ENCODE measurements at regions of chr3 and their contacts with region 1.

Region 1: DNA sequence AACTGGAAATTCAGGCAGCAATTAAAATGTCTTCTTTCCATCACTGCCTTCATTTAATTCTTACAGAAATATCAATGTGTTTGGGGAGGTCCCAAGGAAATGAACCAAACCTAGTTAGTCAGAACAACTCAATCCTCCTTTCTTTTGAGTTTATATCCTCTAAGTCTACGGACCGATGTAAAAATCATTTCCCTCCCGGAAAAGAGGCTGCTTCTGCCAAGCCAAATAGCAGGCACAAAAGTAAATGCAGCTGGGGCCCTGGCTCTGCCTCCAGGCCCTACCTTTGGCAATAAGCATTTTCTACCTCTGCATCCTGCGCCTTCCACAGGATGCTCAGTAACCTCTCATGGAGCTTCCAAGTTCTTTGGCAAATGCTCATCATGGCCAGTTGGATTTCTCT is 122.5 kb upstream of the COL8A1 start:
- DNase-seq: no peak

Region 2: DNA sequence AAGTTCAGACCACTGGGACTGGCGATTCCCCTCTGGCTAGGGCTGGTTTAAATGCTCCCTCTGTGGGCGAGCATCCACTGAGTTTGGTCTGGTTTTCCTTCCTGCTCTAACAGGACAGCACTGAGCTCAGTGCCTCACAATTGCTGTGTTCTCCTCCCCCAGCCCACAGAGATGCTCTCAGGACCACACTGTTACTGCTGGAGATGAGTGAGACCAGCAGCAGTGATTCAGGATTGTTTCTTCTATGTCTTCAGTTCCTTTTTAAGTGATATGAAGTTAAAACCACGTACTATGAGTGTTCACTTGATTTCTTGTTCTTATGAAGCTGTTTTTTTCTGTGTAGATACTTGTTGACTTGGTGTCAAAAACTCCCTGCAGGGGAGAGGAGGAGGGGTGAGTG is 57.9 kb before region 1 on chr3:
- intact Hi-C with region 1: no loop called
- DNase-seq: no peak

Region 3: DNA sequence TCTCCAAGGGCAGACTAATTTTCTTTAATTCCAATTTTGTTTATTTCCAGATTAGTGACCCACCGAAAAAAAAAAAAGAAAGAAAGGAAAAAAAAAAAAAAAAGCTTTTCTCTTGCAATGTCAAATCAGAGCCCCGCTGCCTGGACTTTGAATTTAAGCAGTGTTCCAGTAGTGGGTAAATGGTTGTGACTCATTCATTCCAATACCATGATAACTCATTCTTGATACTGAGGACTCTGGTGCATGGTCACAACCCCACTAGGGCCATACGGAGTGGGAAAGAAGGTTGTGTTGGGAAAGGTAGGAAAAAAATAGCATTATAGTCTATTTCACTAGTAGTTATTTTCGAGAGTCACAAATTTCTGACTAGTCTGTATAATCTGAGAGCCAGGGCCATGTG is 63.4 kb after region 1 on chr3:
- intact Hi-C with region 1: loop called in 1 of 2 experiments (anchors 10 kb)
- DNase-seq: no peak

Region 4: DNA sequence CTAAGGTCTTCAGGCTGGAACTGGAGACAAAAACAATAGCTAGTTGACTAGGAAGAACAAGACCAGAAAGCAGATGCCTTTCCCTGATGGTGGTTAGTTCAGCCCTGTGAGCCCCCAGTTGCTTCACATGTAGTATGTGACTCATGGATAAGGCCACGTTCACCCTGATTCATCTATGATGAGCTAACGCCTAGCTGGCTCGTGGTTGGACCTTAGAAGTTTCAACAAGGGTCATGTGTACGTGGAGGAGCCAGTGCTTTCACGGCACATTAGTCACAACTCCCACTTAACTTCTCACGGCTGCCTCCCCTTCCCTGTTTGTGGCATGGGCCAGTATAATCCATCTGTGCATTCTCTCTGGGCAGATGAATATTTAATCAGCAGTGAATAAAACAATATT is 143.1 kb after region 1 on chr3:
- intact Hi-C with region 1: no loop called
- DNase-seq: no peak

Measured in posterior vena cava (tissue), 2 donors.